K562 (cell line): ENCODE measurements at regions of chr12 and their contacts with region 1.

Region 1: DNA sequence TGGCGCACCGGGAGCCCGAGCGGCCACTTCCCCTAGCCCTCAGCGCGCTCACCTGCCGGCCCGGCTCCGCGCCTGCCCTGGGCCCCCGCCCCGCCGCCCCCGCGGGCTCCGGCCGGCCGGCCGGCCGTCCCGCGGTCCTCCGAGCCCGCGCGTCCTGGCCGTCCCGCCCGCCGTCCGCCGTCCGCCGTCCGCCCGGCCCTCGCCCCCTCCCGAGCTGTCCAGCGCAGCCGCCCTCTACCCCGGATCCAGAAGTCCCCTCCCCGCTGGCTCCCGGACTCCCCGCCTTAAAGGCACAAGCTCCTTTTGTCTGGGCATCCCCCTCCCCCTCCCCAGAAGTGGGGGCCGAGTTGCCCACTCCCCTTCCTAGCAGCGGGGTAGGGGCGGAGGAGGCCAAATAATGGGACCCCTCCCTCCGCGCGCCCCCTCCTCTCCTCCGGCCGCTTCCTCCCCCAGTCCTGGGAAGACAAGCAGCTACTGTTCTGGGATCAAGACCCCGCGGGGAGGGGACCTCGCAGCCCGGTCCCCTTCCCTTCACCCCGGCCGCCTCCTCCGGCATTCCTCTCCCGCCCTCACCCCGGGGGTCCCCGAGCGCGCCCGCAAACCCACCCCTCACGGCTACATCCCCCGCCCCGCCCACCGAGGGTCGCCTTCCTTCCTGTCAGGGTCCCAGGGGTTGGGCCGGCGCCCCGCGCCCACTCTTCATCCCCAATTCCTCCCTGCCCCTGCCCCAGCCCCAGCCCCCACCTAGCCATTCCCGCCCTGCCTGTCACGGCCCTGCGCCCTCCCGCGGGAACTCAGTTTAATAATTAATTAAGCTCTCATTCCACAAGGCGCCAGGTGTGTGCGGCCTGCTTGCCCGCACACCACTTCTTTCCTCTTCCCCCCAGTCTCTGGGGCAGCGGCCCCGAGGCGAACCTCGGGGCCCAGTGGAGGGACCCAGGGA is at the start of gene ADCY6:
- DNase-seq: peak in 3 of 4 experiments; percentile 29 to 62 (median 56)
- ATAC-seq: peak; percentile 57
- H3K4me3 ChIP-seq: peak within 1 kb of the TSS; percentile 11; the same call in 1 of the 2 replicates
- H3K27ac ChIP-seq: no peak within 1 kb of the TSS
- H3K4me1 ChIP-seq: peaks cover 0 to 11% of the 10 kb centered on the region in 2 experiments; a peak in 2 of 5 replicates
- H3K27me3 ChIP-seq: peaks cover 11 to 29% of the 10 kb centered on the region in 2 experiments; a peak in 4 of 5 replicates
- CTCF ChIP-seq: no peak
- EP300 ChIP-seq: no peak
- POLR2A ChIP-seq: no peak
- RAD21 ChIP-seq: no peak
- polyA plus RNA-seq, gene ADCY6: 0.01 to 0.10 TPM

Region 2: DNA sequence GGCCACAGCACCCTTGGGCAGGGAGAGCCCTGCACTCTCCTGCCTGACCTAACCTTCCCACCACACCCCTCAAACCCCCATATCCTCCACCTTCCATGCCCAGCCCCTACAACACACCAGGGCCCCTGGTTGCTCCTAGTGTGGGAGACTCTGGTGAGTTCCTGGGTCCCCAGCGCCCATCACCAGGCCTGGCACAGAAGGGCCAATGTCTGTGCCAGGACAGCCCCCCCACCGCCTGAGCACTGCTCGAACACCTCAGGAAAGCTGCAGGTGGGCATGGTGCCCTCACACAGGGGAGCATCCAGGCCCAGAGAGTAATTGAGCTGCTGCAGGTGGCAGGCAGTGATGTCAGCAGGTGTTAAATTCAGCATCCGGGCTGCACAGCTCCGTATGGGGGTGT is 15.4 kb before region 1 on chr12:
- CTCF ChIA-PET with region 1: no interaction called
- POLR2A ChIA-PET with region 1: interaction called, 10 read pairs
- in situ Hi-C with region 1: no loop called
- intact Hi-C with region 1: no loop called
- DNase-seq: no peak
- ATAC-seq: no peak
- H3K4me3 ChIP-seq: no peak overlapping the region
- H3K27ac ChIP-seq: no peak overlapping the region
- H3K4me1 ChIP-seq: peaks cover 0 to 6% of the 10 kb centered on the region in 2 experiments; a peak in 1 of 5 replicates
- H3K27me3 ChIP-seq: peaks cover 28 to 78% of the 10 kb centered on the region in 2 experiments
- CTCF ChIP-seq: no peak
- EP300 ChIP-seq: no peak
- POLR2A ChIP-seq: no peak
- RAD21 ChIP-seq: no peak

Region 3: GRCh38 chr12:48865434-48866290 is 76.5 kb after region 1 on chr12 and contains the start of gene RND1:
- CTCF ChIA-PET with region 1: no interaction called
- POLR2A ChIA-PET with region 1: no interaction called
- in situ Hi-C with region 1: no loop called
- intact Hi-C with region 1: no loop called
- DNase-seq: peak; percentile 92 to 95 (median 94)
- ATAC-seq: peak; percentile 98
- H3K4me3 ChIP-seq: peak within 1 kb of the TSS; percentile 39
- H3K27ac ChIP-seq: peak within 1 kb of the TSS; percentile 37; the same call in 2 of the 3 replicates
- H3K4me1 ChIP-seq: peaks cover 7 to 8% of the 10 kb centered on the region in 2 experiments; a peak in 3 of 5 replicates
- H3K27me3 ChIP-seq: peaks cover 27 to 33% of the 10 kb centered on the region in 2 experiments
- CTCF ChIP-seq: peak in 1 of 3 experiments; percentile 19; a peak in 1 of 6 replicates
- EP300 ChIP-seq: no peak
- POLR2A ChIP-seq: peak; percentile 79
- RAD21 ChIP-seq: no peak
- polyA plus RNA-seq, gene RND1: not detected

Region 4: DNA sequence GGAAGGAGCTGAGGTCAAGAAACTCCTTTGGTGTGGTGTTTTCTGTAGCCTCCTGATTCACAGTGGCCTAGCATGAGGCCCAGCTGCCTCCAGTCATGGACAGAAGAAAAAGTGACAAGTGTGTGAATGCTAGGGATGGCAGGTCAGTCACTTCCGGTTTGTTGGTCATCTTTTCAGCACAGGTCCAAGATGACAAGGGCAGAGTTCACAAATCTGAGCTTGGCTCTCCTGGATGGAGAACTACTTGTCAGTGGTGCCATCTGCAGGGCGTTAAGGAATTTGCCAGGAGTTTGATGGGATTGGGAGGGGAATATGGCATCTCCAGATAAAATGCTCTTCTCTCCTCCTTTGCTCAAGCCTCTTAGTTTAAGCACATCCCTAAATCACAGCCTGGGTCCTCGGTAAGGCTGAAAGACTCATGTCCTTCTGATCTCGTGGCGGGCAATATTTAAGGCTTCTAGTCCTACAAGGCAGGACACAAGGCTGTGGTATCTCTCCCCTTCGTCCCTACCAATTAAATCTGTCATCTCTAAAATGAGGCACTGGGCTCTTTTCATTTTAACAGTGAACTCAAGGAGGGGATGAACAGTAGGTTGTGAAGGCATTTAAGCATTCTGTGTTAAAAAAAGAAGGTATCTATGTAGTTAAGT is 332.0 kb after region 1 on chr12:
- CTCF ChIA-PET with region 1: no interaction called
- POLR2A ChIA-PET with region 1: no interaction called
- in situ Hi-C with region 1: no loop called
- intact Hi-C with region 1: no loop called
- DNase-seq: peak; percentile 31 to 65 (median 41)
- ATAC-seq: peak; percentile 75
- H3K4me3 ChIP-seq: no peak overlapping the region
- H3K27ac ChIP-seq: no peak overlapping the region
- H3K4me1 ChIP-seq: no peaks in the 10 kb centered on the region; a peak in 2 of 5 replicates
- H3K27me3 ChIP-seq: no peaks in the 10 kb centered on the region
- CTCF ChIP-seq: peak; percentile 58 to 66 (median 63)
- EP300 ChIP-seq: no peak
- POLR2A ChIP-seq: no peak
- RAD21 ChIP-seq: peak in 1 of 2 experiments; percentile 78; a peak in 3 of 4 replicates